GM12878 (cell line): ENCODE measurements at regions of chr13 and their contacts with region 1.

Region 1: GRCh38 chr13:27826379-27827353 is 34.4 kb downstream of the GSX1 start:
- DNase-seq: peak; percentile 12
- ATAC-seq: peak; percentile 83
- H3K4me3 ChIP-seq: no peak overlapping the region
- H3K27ac ChIP-seq: no peak overlapping the region
- H3K4me1 ChIP-seq: no peaks in the 10 kb centered on the region
- H3K27me3 ChIP-seq: peaks cover 2 to 6% of the 10 kb centered on the region in 2 experiments
- CTCF ChIP-seq: peak; percentile 87 to 96 (median 94)
- EP300 ChIP-seq: no peak
- POLR2A ChIP-seq: no peak
- RAD21 ChIP-seq: peak; percentile 87

Region 2: GRCh38 chr13:27362064-27362883 is 464.4 kb before region 1 on chr13:
- CTCF ChIA-PET with region 1: interaction called, 186 read pairs
- POLR2A ChIA-PET with region 1: no interaction called
- RAD21 ChIA-PET with region 1: interaction called, 108 read pairs
- SMC1A ChIA-PET with region 1: interaction called, 48 read pairs
- in situ Hi-C with region 1: no loop called
- intact Hi-C with region 1: loop called (anchors 1 kb)
- DNase-seq: no peak
- ATAC-seq: peak; percentile 98
- H3K4me3 ChIP-seq: peak overlapping the region; percentile 29
- H3K27ac ChIP-seq: no peak overlapping the region
- H3K4me1 ChIP-seq: no peaks in the 10 kb centered on the region
- H3K27me3 ChIP-seq: peaks cover 3 to 4% of the 10 kb centered on the region in 2 experiments; a peak in 1 of 4 replicates
- CTCF ChIP-seq: peak; percentile 93 to 96 (median 95)
- EP300 ChIP-seq: no peak
- POLR2A ChIP-seq: no peak
- RAD21 ChIP-seq: peak; percentile 83

Region 3: DNA sequence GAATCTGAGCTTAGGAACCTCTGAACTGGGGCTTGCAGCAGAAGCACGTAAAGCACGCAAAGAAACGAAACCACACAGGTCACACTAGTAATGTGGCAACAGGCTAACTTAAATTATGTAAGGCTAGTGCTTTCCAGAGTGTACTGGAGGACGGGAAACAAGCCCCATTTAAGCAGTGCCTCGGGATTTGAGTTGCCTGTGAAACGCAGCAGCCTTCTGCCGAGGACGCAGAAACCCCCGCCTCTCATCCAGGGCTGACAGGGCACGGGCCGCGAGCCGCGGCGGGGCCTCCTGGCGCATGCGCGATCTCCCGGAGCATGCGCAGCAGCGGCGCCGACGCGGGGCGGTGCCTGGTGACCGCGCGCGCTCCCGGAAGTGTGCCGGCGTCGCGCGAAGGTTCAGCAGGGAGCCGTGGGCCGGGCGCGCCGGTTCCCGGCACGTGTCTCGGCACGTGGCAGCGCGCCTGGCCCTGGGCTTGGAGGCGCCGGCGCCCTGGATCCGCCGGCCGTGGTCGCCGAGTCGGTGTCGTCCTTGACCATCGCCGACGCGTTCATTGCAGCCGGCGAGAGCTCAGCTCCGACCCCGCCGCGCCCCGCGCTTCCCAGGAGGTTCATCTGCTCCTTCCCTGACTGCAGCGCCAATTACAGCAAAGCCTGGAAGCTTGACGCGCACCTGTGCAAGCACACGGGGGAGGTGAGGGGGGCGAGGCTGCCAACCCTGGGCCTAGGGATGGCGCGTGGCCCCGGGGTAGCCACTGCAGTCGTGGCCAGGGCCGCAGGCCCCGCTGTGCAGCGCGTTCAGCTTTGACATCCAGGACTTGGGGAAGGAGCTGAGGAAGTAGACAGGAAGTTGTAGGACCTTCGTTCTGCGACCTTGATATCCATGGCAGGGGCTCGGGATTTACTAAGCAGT is 402.2 kb before region 1 on chr13 and contains the start of gene GTF3A:
- CTCF ChIA-PET with region 1: interaction called, 7 read pairs
- POLR2A ChIA-PET with region 1: no interaction called
- RAD21 ChIA-PET with region 1: interaction called, 11 read pairs
- SMC1A ChIA-PET with region 1: interaction called, 4 read pairs
- in situ Hi-C with region 1: no loop called
- intact Hi-C with region 1: no loop called
- DNase-seq: peak; percentile 71
- ATAC-seq: peak; percentile 83
- H3K4me3 ChIP-seq: peak within 1 kb of the TSS; percentile 68
- H3K27ac ChIP-seq: peak within 1 kb of the TSS; percentile 81
- H3K4me1 ChIP-seq: peaks cover 12% of the 10 kb centered on the region
- H3K27me3 ChIP-seq: no peaks in the 10 kb centered on the region
- CTCF ChIP-seq: no peak
- EP300 ChIP-seq: no peak
- POLR2A ChIP-seq: peak; percentile 91
- RAD21 ChIP-seq: no peak
- polyA plus RNA-seq, gene GTF3A: 74.2 to 187 TPM

Region 4: GRCh38 chr13:27565818-27566217 is 260.8 kb before region 1 on chr13:
- CTCF ChIA-PET with region 1: no interaction called
- POLR2A ChIA-PET with region 1: no interaction called
- RAD21 ChIA-PET with region 1: no interaction called
- SMC1A ChIA-PET with region 1: no interaction called
- in situ Hi-C with region 1: no loop called
- intact Hi-C with region 1: no loop called
- DNase-seq: no peak
- ATAC-seq: no peak
- H3K4me3 ChIP-seq: no peak overlapping the region
- H3K27ac ChIP-seq: no peak overlapping the region
- H3K4me1 ChIP-seq: no peaks in the 10 kb centered on the region
- H3K27me3 ChIP-seq: no peaks in the 10 kb centered on the region
- CTCF ChIP-seq: no peak
- EP300 ChIP-seq: no peak
- POLR2A ChIP-seq: no peak
- RAD21 ChIP-seq: no peak

Region 5: DNA sequence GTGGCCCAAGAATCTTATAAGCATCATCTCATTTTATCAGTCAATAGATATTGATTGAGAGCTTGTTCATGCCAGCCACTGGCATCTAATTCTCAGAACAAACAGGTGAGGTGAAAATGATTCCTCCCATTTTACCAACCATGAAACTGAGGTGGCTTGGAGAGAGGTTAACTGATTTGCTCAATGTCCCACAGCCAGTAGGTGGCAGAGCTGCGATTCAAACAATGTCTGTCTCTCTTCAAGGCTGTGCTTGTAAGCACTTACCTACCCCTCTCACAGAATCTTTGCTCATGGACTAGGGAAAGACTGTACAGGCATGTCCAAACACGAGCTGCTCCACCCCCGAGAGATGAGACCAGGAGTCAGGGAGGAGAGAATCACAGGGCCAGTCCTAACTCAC is 55.9 kb before region 1 on chr13:
- CTCF ChIA-PET with region 1: interaction called, 122 read pairs
- POLR2A ChIA-PET with region 1: no interaction called
- RAD21 ChIA-PET with region 1: interaction called, 23 read pairs
- SMC1A ChIA-PET with region 1: interaction called, 32 read pairs
- in situ Hi-C with region 1: no loop called
- intact Hi-C with region 1: loop called (anchors 1 kb)
- DNase-seq: no peak
- ATAC-seq: peak; percentile 86
- H3K4me3 ChIP-seq: no peak overlapping the region
- H3K27ac ChIP-seq: no peak overlapping the region
- H3K4me1 ChIP-seq: peaks cover 3% of the 10 kb centered on the region; the same call in 1 of the 2 replicates
- H3K27me3 ChIP-seq: peaks cover 0 to 1% of the 10 kb centered on the region in 2 experiments; a peak in 1 of 4 replicates
- CTCF ChIP-seq: peak; percentile 59 to 67 (median 64)
- EP300 ChIP-seq: no peak
- POLR2A ChIP-seq: no peak
- RAD21 ChIP-seq: peak; percentile 49

Region 6: GRCh38 chr13:27851049-27851850 is 24.6 kb after region 1 on chr13:
- CTCF ChIA-PET with region 1: interaction called, 12 read pairs
- POLR2A ChIA-PET with region 1: no interaction called
- RAD21 ChIA-PET with region 1: interaction called, 3 read pairs
- SMC1A ChIA-PET with region 1: interaction called, 7 read pairs
- in situ Hi-C with region 1: no loop called
- intact Hi-C with region 1: no loop called
- DNase-seq: no peak
- ATAC-seq: no peak
- H3K4me3 ChIP-seq: no peak overlapping the region
- H3K27ac ChIP-seq: no peak overlapping the region
- H3K4me1 ChIP-seq: no peaks in the 10 kb centered on the region
- H3K27me3 ChIP-seq: peaks cover 0 to 6% of the 10 kb centered on the region in 2 experiments; a peak in 3 of 4 replicates
- CTCF ChIP-seq: no peak
- EP300 ChIP-seq: no peak
- POLR2A ChIP-seq: no peak
- RAD21 ChIP-seq: no peak

Region 7: GRCh38 chr13:27960362-27961226 is 133.9 kb after region 1 on chr13:
- CTCF ChIA-PET with region 1: interaction called, 360 read pairs
- POLR2A ChIA-PET with region 1: interaction called, 3 read pairs
- RAD21 ChIA-PET with region 1: interaction called, 163 read pairs
- SMC1A ChIA-PET with region 1: interaction called, 112 read pairs
- in situ Hi-C with region 1: no loop called
- intact Hi-C with region 1: no loop called
- DNase-seq: no peak
- ATAC-seq: peak; percentile 80
- H3K4me3 ChIP-seq: no peak overlapping the region; the same call in 1 of the 2 replicates
- H3K27ac ChIP-seq: no peak overlapping the region
- H3K4me1 ChIP-seq: no peaks in the 10 kb centered on the region
- H3K27me3 ChIP-seq: peaks cover 6 to 7% of the 10 kb centered on the region in 2 experiments; a peak in 3 of 4 replicates
- CTCF ChIP-seq: peak; percentile 47 to 58 (median 58); a peak in 5 of 6 replicates
- EP300 ChIP-seq: no peak
- POLR2A ChIP-seq: no peak
- RAD21 ChIP-seq: peak; percentile 44